ENCODE measurements at regions of chr7 and their contacts with region 1.

Region 1: GRCh38 chr7:140479062-140479738 is at the start of gene MKRN1:
- DNase-seq: peak; percentile 86 to 92 (median 89)
- H3K4me3 ChIP-seq: peak within 1 kb of the TSS; percentile 94 to 99 (median 96)
- H3K4me3 Mint-ChIP-seq: peak within 1 kb of the TSS; percentile 97 to 99
- H3K27ac ChIP-seq: peak within 1 kb of the TSS; percentile 89 to 96
- H3K27ac Mint-ChIP-seq: peak within 1 kb of the TSS; percentile 91 to 98 (median 98)
- H3K4me1 ChIP-seq: peaks cover 22% of the 10 kb centered on the region in 2 donors
- H3K4me1 Mint-ChIP-seq: peaks cover 29% of the 10 kb centered on the region
- H3K27me3 ChIP-seq: no peaks in the 10 kb centered on the region
- H3K27me3 Mint-ChIP-seq: peaks cover 0 to 4% (median 0%) of the 10 kb centered on the region in 3 donors
- CTCF ChIP-seq: no peak
- polyA plus RNA-seq, gene MKRN1: 88.4 to 160 (median 127) TPM

Region 2: DNA sequence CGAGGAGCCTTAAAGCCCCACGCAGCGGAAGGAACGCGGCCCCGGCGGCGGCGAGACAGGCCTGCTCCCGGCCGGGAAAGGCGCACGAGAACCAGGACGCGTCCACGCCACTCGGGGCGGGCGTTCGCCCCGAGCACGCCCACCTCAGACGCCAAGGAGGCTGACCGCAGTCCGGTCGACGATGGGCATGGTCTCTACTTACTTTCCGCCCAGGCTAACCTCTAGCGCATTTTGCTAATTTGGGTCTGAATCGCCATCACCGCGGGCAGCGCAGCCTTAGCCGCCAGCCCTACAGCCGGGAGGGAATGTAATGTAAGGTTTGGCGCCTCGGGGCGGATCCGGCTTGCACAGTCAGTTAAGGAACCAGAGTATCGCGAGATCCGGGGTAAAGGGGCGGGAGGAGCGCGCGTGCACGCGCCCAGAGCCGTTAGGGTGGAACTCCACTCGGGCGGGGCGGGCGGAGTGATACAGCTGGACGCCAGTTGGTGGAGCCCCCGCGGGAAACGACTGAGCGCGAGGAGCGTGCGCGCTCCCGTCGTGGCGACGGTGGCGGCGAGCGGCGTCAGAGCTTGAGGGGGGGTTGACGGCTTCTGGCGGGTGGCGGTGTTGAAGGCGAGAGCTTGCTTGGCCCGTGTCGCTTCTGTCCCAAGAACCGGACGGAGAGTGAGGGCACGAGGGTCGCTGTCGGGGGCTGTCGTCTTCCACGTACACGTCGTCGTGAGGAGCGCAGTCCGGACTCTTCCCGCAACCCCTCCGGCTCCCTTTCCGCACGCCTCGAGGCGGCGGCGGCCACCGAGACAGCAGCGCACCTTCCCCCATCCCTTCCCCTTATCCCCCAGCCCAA is 1119.6 kb before region 1 on chr7 and contains the start of gene LUC7L2:
- intact Hi-C with region 1: loop called in 1 of 2 experiments (anchors 10 kb)
- DNase-seq: peak; percentile 98 to 99 (median 99)
- H3K4me3 ChIP-seq: peak within 1 kb of the TSS; percentile 46 to 93 (median 92)
- H3K4me3 Mint-ChIP-seq: peak within 1 kb of the TSS; percentile 97 to 98
- H3K27ac ChIP-seq: peak within 1 kb of the TSS; percentile 94 to 100
- H3K27ac Mint-ChIP-seq: peak within 1 kb of the TSS; percentile 95 to 99 (median 99)
- H3K4me1 ChIP-seq: peaks cover 28 to 55% of the 10 kb centered on the region in 2 donors
- H3K4me1 Mint-ChIP-seq: peaks cover 40% of the 10 kb centered on the region
- H3K27me3 ChIP-seq: no peaks in the 10 kb centered on the region
- H3K27me3 Mint-ChIP-seq: no peaks in the 10 kb centered on the region
- CTCF ChIP-seq: no peak
- polyA plus RNA-seq, gene LUC7L2: 24.7 to 54.5 (median 26.8) TPM

Region 3: GRCh38 chr7:140209866-140210609 is 269.2 kb before region 1 on chr7:
- intact Hi-C with region 1: no loop called
- DNase-seq: peak; percentile 75 to 80 (median 78)
- H3K4me3 ChIP-seq: peak overlapping the region in 1 of 3 experiments; percentile 58
- H3K4me3 Mint-ChIP-seq: peak overlapping the region; percentile 58 to 67
- H3K27ac ChIP-seq: peak overlapping the region; percentile 61 to 79
- H3K27ac Mint-ChIP-seq: peak overlapping the region; percentile 54 to 92 (median 86)
- H3K4me1 ChIP-seq: peaks cover 53% of the 10 kb centered on the region in 2 donors
- H3K4me1 Mint-ChIP-seq: peaks cover 67% of the 10 kb centered on the region
- H3K27me3 ChIP-seq: peaks cover 0 to under 1% of the 10 kb centered on the region in 2 donors
- H3K27me3 Mint-ChIP-seq: peaks cover 4 to 10% (median 5%) of the 10 kb centered on the region in 3 donors
- CTCF ChIP-seq: no peak

Region 4: GRCh38 chr7:140517546-140518369 is 38.6 kb after region 1 on chr7:
- intact Hi-C with region 1: no loop called
- DNase-seq: peak; percentile 46 to 64 (median 55)
- H3K4me3 ChIP-seq: no peak overlapping the region
- H3K4me3 Mint-ChIP-seq: peak overlapping the region; percentile 32 to 80
- H3K27ac ChIP-seq: no peak overlapping the region
- H3K27ac Mint-ChIP-seq: no peak overlapping the region
- H3K4me1 ChIP-seq: peaks cover 0 to 2% of the 10 kb centered on the region in 2 donors
- H3K4me1 Mint-ChIP-seq: peaks cover 4% of the 10 kb centered on the region
- H3K27me3 ChIP-seq: no peaks in the 10 kb centered on the region
- H3K27me3 Mint-ChIP-seq: peaks cover 0 to 4% (median 3%) of the 10 kb centered on the region in 3 donors
- CTCF ChIP-seq: peak; percentile 81

Region 5: DNA sequence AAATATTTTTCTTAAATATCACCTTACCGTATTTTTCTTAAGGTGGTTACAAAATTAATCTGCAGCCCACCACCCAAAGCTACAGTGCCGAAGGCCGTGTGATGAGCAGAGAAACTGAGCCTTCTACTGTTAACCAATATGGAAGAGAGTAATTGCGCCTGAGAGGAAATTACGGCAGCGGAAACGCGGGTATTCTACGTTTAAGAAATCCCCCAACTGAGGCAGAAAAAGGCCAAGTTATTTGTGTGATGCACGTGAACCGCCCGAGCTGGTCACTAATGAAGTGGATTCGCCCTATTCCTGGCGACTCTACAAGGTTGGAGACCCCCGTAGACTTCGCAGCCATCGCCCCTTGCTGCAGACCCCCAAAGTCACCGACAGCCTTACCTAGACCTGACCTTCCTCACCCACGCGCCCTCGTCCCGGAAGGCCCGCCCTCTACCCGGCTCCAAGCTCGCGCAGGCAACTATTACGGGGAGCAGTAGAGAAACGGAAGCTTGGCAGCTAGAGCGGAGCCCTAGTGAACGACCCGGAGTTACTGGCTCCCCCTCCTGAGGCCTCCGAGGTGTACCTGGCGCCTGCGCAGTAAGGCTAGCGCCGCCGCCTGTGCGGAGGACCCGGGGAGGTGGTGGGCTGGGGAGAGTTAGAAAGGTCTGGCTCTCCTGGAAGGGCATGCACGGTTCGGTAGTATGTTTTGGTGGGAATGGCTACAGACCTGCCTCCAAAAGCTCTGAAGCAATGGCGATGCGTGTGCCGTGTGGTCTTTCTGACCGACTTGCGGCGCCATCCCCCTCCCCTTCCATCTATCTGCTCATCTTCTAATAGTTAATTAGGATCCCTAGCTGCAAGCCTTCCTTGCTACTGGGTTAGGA is 535.6 kb after region 1 on chr7 and contains the start of gene MRPS33:
- intact Hi-C with region 1: loop called in 1 of 2 experiments (anchors 10 kb)
- DNase-seq: peak; percentile 89 to 93 (median 91)
- H3K4me3 ChIP-seq: peak within 1 kb of the TSS; percentile 55 to 83 (median 78)
- H3K4me3 Mint-ChIP-seq: peak within 1 kb of the TSS; percentile 92 to 98
- H3K27ac ChIP-seq: peak within 1 kb of the TSS; percentile 71 to 92
- H3K27ac Mint-ChIP-seq: peak within 1 kb of the TSS; percentile 93 to 99 (median 96)
- H3K4me1 ChIP-seq: peaks cover 12 to 18% of the 10 kb centered on the region in 2 donors
- H3K4me1 Mint-ChIP-seq: peaks cover 21% of the 10 kb centered on the region
- H3K27me3 ChIP-seq: peaks cover 12 to 13% of the 10 kb centered on the region in 2 donors
- H3K27me3 Mint-ChIP-seq: peaks cover 14 to 22% (median 16%) of the 10 kb centered on the region in 3 donors
- CTCF ChIP-seq: peak; percentile 43
- polyA plus RNA-seq, gene MRPS33: 8.9 to 52.7 (median 45.0) TPM

Region 6: GRCh38 chr7:141511676-141512396 is 1032.6 kb after region 1 on chr7:
- intact Hi-C with region 1: no loop called
- DNase-seq: no peak
- H3K4me3 ChIP-seq: no peak overlapping the region
- H3K4me3 Mint-ChIP-seq: peak overlapping the region in 1 of 2 donors; percentile 60
- H3K27ac ChIP-seq: no peak overlapping the region
- H3K27ac Mint-ChIP-seq: no peak overlapping the region
- H3K4me1 ChIP-seq: no peaks in the 10 kb centered on the region
- H3K4me1 Mint-ChIP-seq: peaks cover 8% of the 10 kb centered on the region
- H3K27me3 ChIP-seq: peaks cover 28 to 50% of the 10 kb centered on the region in 2 donors
- H3K27me3 Mint-ChIP-seq: peaks cover 47 to 51% (median 48%) of the 10 kb centered on the region in 3 donors
- CTCF ChIP-seq: no peak

Measured in CD14-positive monocyte (primary cell).